ENCODE measurements at regions of chr1 and their contacts with region 1.

Region 1: GRCh38 chr1:117121776-117122697 is 488 bp upstream of the TRIM45 start:
- DNase-seq: peak; percentile 96
- H3K4me3 ChIP-seq: peak overlapping the region; percentile 48 to 63
- H3K27ac ChIP-seq: peak overlapping the region; percentile 81 to 85
- H3K4me1 ChIP-seq: no peaks in the 10 kb centered on the region
- H3K27me3 ChIP-seq: no peaks in the 10 kb centered on the region
- CTCF ChIP-seq: peak; percentile 48 to 87 (median 66)
- POLR2A ChIP-seq: no peak

Region 2: DNA sequence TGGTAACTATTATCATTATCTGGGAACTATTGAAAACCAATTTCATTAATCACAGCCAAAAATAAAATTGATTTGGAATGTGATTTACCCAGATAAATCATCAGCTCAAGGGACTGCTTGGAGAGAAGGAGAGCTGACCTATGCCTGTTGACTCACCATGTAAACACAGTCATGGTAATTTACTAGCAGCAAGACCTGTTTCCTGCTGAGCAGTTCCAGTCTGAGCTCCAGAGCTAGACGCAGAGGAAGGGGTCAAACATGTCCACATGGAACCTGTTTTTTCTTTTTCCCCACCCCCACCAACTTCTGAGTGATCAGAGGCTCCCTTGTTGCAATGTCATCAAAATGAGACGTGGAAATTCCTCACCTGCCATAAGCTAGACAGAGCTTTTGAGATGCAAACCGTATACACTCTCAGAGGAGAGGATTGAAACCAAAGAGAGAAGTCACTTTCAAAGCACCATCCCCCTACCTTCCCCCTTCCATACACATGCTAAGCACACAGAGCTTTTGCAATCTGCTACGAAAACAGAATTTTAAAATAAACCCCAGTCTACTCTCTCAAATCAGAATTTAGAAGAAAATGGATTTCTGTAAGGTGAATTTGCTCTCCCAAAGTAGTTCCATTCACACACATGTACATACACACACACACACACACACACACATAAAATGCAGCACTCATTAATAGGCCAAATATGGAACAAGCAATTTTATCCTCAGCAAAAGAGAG is 268.2 kb before region 1 on chr1:
- intact Hi-C with region 1: loop called (anchors 10 kb)
- DNase-seq: peak; percentile 49
- H3K4me3 ChIP-seq: no peak overlapping the region
- H3K27ac ChIP-seq: no peak overlapping the region
- H3K4me1 ChIP-seq: no peaks in the 10 kb centered on the region
- H3K27me3 ChIP-seq: no peaks in the 10 kb centered on the region
- CTCF ChIP-seq: no peak
- POLR2A ChIP-seq: no peak

Region 3: GRCh38 chr1:116919802-116920201 is 202.2 kb before region 1 on chr1:
- intact Hi-C with region 1: no loop called
- DNase-seq: no peak
- H3K4me3 ChIP-seq: no peak overlapping the region
- H3K27ac ChIP-seq: no peak overlapping the region
- H3K4me1 ChIP-seq: peaks cover 3% of the 10 kb centered on the region
- H3K27me3 ChIP-seq: no peaks in the 10 kb centered on the region
- CTCF ChIP-seq: no peak
- POLR2A ChIP-seq: no peak

Measured in prostate gland (tissue), 2 donors.